Activated T-helper 1 cell treated with anti-CD3 and anti-CD28 coated beads, Interleukin-12 subunit alpha, Interleukin-12 subunit beta, Interleukin-2, Interleukin-4 antibody, amounts not matched to agents 30 ng/mL and 10 ng/mL and 1 ng/mL, durations not matched to agents 14 hours and 24 hours and 36 hours (primary cell): ENCODE measurements at regions of chr14 and their contacts with region 1.

Region 1: GRCh38 chr14:93115069-93115820 is 480 bp downstream of the ITPK1 start:
- DNase-seq: peak; percentile 87
- H3K4me3 Mint-ChIP-seq: peak overlapping the region; percentile 88
- H3K27ac Mint-ChIP-seq: peak overlapping the region; percentile 48
- H3K4me1 Mint-ChIP-seq: peaks cover 28% of the 10 kb centered on the region
- H3K27me3 Mint-ChIP-seq: peaks cover 1% of the 10 kb centered on the region

Region 2: DNA sequence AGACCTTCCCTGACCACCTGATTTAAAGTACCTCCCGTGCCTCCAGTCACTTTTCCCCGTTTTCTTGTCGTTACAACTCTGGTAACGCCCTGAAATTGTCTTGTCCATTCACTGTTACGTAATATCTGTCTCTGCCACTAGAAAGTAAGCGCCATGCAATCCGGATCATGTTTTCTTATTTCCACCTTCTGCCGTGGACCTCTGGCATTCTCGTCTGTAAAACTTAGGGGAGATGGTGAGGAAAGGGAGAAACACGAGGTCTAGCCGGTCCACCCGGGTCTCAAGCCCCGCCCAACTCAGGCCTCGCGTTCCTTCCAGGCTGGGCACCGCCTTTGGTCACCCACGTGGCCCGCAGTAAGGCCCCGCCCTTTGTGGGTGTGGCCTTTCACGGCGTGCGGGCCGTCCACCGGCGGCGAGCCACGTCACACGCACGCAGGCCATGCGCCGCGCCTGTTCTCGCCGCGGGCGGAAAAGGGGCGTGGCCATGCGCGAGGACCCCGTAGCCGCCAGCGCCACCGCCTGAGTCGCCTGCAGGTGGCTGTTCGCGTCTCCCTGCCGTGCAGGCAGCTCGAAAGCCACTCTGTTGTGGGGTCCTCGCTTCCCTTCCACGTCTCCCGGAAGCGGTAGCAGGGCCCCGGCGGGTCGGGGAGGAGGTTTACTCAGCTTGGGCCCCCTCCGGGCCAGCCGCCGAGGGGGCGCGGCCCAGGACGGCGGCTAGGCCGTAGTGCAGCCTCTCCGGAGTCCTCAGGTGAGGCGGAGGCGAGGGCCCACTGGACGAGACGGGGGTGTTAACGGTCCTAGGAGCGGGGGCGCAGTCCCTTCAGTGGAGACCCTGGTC is 321.3 kb before region 1 on chr14 and contains the start of gene GOLGA5:
- intact Hi-C with region 1: loop called (anchors 1 kb)
- DNase-seq: peak; percentile 98
- H3K4me3 Mint-ChIP-seq: peak within 1 kb of the TSS; percentile 99
- H3K27ac Mint-ChIP-seq: peak within 1 kb of the TSS; percentile 98
- H3K4me1 Mint-ChIP-seq: peaks cover 30% of the 10 kb centered on the region
- H3K27me3 Mint-ChIP-seq: no peaks in the 10 kb centered on the region
- total RNA-seq, gene GOLGA5: 22.2 and 22.6 TPM in 2 replicates

Region 3: DNA sequence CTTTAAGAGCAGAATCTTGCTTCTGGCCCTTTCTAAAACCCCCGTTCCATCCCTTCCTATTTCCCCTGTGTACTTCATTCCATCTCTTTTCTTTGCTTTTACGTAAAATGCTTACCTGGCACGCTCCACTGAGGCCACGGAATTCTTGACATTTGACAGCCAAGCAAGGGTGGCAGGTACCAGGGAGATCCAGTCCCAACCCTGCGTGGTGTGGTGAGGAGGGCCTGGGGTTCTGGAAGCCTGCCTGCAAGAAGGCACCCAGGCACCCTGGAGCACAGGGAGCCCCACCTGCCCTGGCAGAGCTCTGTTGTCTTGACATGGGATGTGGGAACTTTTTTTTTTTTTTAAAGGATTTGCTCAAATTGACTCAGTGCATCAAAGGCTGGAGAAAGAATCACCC is 48.2 kb before region 1 on chr14:
- intact Hi-C with region 1: loop called (anchors 2 kb)
- DNase-seq: no peak
- H3K4me3 Mint-ChIP-seq: no peak overlapping the region
- H3K27ac Mint-ChIP-seq: no peak overlapping the region
- H3K4me1 Mint-ChIP-seq: peaks cover 27% of the 10 kb centered on the region
- H3K27me3 Mint-ChIP-seq: no peaks in the 10 kb centered on the region

Region 4: DNA sequence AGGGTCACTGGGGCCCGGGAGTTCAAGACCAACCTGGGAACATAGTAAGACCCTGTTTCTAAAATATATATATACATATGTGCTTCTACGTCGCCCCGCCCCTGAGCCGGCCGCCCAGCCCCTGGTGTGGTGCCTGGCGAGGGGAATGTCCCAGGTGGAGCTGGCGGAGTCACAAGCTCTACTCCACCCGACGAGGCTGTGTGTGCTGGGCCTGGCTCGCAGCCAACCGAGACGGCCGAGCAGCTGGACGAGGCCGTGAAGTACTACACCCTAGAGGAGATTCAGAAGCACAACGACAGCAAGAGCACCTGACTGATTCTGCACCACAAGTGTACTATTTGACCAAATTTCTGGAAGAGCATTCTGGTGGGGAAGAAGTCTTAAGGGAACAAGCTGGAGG is 22.6 kb after region 1 on chr14:
- intact Hi-C with region 1: loop called (anchors 1 kb)
- DNase-seq: no peak
- H3K4me3 Mint-ChIP-seq: no peak overlapping the region
- H3K27ac Mint-ChIP-seq: no peak overlapping the region
- H3K4me1 Mint-ChIP-seq: peaks cover 5% of the 10 kb centered on the region
- H3K27me3 Mint-ChIP-seq: no peaks in the 10 kb centered on the region

Region 5: DNA sequence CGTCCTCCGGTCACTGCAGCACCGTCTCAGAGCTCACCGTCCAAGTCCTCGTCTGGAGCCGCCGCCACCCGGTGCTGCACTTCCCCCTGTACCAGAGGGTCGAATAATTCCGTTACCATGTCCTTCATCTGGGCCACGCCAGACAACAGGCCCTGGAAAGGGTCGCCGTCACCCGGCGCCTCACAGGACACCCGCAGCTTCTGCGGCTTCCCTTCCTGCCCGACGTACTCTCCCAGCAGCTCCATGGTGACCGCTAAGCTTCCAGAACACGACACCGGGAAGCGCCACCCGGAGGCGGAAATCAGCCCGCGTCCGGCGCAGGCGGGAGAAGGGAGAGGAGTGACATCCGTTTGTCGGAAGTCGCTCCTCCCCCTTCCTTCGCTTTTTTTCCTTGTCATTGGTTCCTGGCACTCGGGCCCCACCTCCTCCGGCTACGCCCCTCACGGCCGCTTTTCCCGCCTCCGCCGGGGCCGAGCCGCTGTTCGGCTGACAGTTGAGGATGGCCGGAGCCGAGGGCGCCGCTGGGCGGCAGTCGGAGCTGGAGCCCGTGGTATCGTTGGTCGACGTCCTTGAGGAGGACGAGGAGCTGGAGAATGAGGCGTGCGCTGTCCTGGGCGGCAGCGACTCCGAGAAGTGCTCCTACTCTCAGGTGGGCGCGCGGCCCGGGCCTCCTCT is 91.7 kb after region 1 on chr14 and contains the starts of genes GON7 and UBR7:
- intact Hi-C with region 1: loop called (anchors 1 kb)
- DNase-seq: peak; percentile 89
- H3K4me3 Mint-ChIP-seq: peak within 1 kb of the TSS; percentile 99
- H3K27ac Mint-ChIP-seq: peak within 1 kb of the TSS; percentile 93
- H3K4me1 Mint-ChIP-seq: peaks cover 48% of the 10 kb centered on the region
- H3K27me3 Mint-ChIP-seq: no peaks in the 10 kb centered on the region
- total RNA-seq, gene GON7: 14.8 and 15.7 TPM in 2 replicates
- total RNA-seq, gene UBR7: 30.1 and 32.4 TPM in 2 replicates

Region 6: GRCh38 chr14:93332853-93333630 is 217.8 kb after region 1 on chr14 and contains the start of gene BTBD7:
- intact Hi-C with region 1: loop called (anchors 2 kb)
- DNase-seq: peak; percentile 94
- H3K4me3 Mint-ChIP-seq: peak within 1 kb of the TSS; percentile 92
- H3K27ac Mint-ChIP-seq: peak within 1 kb of the TSS; percentile 92
- H3K4me1 Mint-ChIP-seq: peaks cover 49% of the 10 kb centered on the region
- H3K27me3 Mint-ChIP-seq: no peaks in the 10 kb centered on the region
- total RNA-seq, gene BTBD7: 20.6 and 22.8 TPM in 2 replicates